IMR-90 (cell line): ENCODE measurements at regions of chr2 and their contacts with region 1.

Region 1: DNA sequence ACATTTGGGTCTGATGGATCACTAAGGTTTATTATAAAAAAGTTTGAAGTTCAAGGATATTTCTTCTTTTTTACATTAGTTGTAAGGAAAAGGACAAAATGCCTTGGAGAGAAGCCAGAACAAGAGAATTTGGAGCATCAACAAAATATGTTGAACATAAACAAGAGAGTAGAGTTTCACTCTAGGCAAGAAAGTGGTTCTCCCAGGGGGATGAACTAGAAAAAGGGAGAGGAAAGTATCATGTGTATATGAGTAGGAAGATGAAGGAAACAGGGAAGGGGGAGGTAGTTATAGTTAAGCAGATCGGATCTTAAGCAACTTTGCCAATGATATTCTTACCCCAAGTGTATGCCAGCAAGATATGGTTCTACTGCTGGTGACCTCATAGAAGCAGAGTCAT is 63.8 kb upstream of the GALNT3 start:
- DNase-seq: peak; percentile 84
- ATAC-seq: peak; percentile 97
- H3K4me3 ChIP-seq: no peak overlapping the region
- H3K27ac ChIP-seq: peak overlapping the region; percentile 83; the same call in 1 of the 2 replicates
- H3K4me1 ChIP-seq: peaks cover 7% of the 10 kb centered on the region
- H3K27me3 ChIP-seq: no peaks in the 10 kb centered on the region
- CTCF ChIP-seq: no peak
- POLR2A ChIP-seq: no peak
- RAD21 ChIP-seq: no peak

Region 2: GRCh38 chr2:165401285-165401852 is 456.5 kb before region 1 on chr2:
- CTCF ChIA-PET with region 1: no interaction called
- POLR2A ChIA-PET with region 1: no interaction called
- dilution Hi-C with region 1: no loop called
- in situ Hi-C with region 1: no loop called
- intact Hi-C with region 1: loop called (anchors 5 kb)
- DNase-seq: peak; percentile 79
- ATAC-seq: peak; percentile 59
- H3K4me3 ChIP-seq: no peak overlapping the region
- H3K27ac ChIP-seq: no peak overlapping the region
- H3K4me1 ChIP-seq: no peaks in the 10 kb centered on the region
- H3K27me3 ChIP-seq: no peaks in the 10 kb centered on the region
- CTCF ChIP-seq: peak; percentile 75
- POLR2A ChIP-seq: no peak
- RAD21 ChIP-seq: peak; percentile 70

Region 3: DNA sequence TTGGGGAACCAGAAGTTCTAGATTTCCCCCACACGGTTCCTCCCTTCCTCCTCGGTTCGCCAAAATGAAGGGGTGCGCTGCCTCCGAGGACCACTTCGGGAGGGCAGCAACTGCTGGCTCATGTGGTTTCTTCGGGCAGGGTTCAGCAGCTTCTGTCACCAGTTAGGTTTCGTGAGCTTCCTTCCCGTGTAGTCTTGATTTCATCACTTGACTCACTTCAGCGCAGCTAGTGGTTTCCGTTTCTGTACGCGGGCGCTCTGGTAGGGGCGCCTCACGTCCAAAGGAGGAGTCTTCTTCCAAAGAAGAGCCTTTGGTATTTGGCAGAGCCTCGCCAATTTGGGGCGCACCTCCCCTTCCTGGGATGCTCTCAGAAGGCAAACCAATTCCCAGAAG is 63.3 kb before region 1 on chr2:
- CTCF ChIA-PET with region 1: no interaction called
- POLR2A ChIA-PET with region 1: no interaction called
- dilution Hi-C with region 1: no loop called
- in situ Hi-C with region 1: no loop called
- intact Hi-C with region 1: loop called (anchors 5 kb)
- DNase-seq: peak; percentile 45
- ATAC-seq: peak; percentile 30
- H3K4me3 ChIP-seq: peak overlapping the region; percentile 47
- H3K27ac ChIP-seq: no peak overlapping the region
- H3K4me1 ChIP-seq: peaks cover 2% of the 10 kb centered on the region; the same call in 1 of the 2 replicates
- H3K27me3 ChIP-seq: peaks cover 6% of the 10 kb centered on the region; the same call in 1 of the 2 replicates
- CTCF ChIP-seq: no peak
- POLR2A ChIP-seq: no peak
- RAD21 ChIP-seq: no peak

Region 4: GRCh38 chr2:166025313-166025712 is 167.4 kb after region 1 on chr2:
- CTCF ChIA-PET with region 1: no interaction called
- POLR2A ChIA-PET with region 1: no interaction called
- dilution Hi-C with region 1: no loop called
- in situ Hi-C with region 1: no loop called
- intact Hi-C with region 1: no loop called
- DNase-seq: no peak
- ATAC-seq: no peak
- H3K4me3 ChIP-seq: no peak overlapping the region
- H3K27ac ChIP-seq: no peak overlapping the region
- H3K4me1 ChIP-seq: no peaks in the 10 kb centered on the region
- H3K27me3 ChIP-seq: no peaks in the 10 kb centered on the region; the same call in 1 of the 2 replicates
- CTCF ChIP-seq: no peak
- POLR2A ChIP-seq: no peak
- RAD21 ChIP-seq: no peak